ENCODE measurements at regions of chr6 and their contacts with region 1.

Region 1: GRCh38 chr6:47603995-47604394 is 94.4 kb upstream of the ADGRF4 start:
- DNase-seq: no peak
- ATAC-seq: no peak
- H3K4me3 ChIP-seq: no peak overlapping the region
- H3K27ac ChIP-seq: no peak overlapping the region
- H3K4me1 ChIP-seq: peaks cover 2% of the 10 kb centered on the region
- H3K27me3 ChIP-seq: no peaks in the 10 kb centered on the region

Region 2: GRCh38 chr6:47044418-47044817 is 559.6 kb before region 1 on chr6:
- intact Hi-C with region 1: no loop called
- DNase-seq: no peak
- ATAC-seq: no peak
- H3K4me3 ChIP-seq: no peak overlapping the region
- H3K27ac ChIP-seq: no peak overlapping the region
- H3K4me1 ChIP-seq: no peaks in the 10 kb centered on the region
- H3K27me3 ChIP-seq: no peaks in the 10 kb centered on the region

Region 3: GRCh38 chr6:47477497-47478232 is 126.3 kb before region 1 on chr6 and contains the start of gene CD2AP:
- intact Hi-C with region 1: loop called in 1 of 4 experiments (anchors 10 kb)
- DNase-seq: peak; percentile 86 to 94 (median 92)
- ATAC-seq: peak; percentile 97 to 98
- H3K4me3 ChIP-seq: peak within 1 kb of the TSS; percentile 85
- H3K27ac ChIP-seq: peak within 1 kb of the TSS; percentile 92
- H3K4me1 ChIP-seq: no peaks in the 10 kb centered on the region
- H3K27me3 ChIP-seq: no peaks in the 10 kb centered on the region
- total RNA-seq, gene CD2AP: 10.0 to 12.4 (median 11.3) TPM

Region 4: GRCh38 chr6:47646567-47647088 is 42.6 kb after region 1 on chr6:
- intact Hi-C with region 1: no loop called
- DNase-seq: no peak
- ATAC-seq: no peak
- H3K4me3 ChIP-seq: no peak overlapping the region
- H3K27ac ChIP-seq: no peak overlapping the region
- H3K4me1 ChIP-seq: peaks cover 1% of the 10 kb centered on the region
- H3K27me3 ChIP-seq: no peaks in the 10 kb centered on the region

Measured in right cardiac atrium (tissue), 5 donors.